ENCODE measurements at regions of chr10 and their contacts with region 1.

Region 1: DNA sequence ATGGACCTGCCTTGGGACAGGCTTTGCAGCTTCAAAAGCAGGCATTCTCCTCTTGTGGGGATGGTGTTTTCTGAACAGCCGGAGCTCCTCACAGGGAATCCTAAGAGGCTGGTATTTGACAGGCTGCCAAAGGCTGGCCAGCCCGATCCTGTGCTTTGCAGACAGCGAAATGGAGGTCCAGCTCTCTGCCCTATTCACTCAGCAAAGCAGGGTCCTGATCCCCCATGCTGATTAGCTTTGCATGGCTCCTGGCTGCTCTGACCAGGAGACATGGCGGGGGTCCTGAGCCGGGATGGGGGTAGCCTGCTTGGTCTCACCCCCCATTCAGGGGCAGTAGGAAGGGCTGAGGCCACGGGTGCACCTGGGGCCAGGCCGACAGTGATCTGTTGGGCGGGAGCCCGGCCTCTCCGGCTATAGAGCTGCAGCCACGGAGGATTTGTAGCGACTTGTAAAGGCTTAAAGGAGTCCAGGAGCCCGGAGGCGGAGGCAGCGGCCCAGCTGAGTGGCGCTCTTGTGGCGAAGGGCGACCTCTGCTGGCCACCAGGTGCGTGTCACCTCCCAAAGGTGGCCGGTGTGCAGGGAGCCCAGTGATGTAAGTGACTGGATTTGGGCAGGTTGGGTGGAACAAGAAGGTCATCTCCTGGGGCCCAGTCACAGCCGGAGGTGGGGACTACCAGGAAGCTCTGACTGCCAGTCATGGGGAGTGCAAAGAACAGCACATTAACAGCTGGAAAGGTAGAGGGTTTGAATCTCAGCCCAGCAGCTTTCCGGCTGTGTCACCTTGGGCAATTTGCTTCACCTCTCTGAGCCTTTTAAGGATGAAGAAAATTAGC is 126.5 kb downstream of the ZMIZ1 start:
- DNase-seq: peak; percentile 89
- ATAC-seq: peak; percentile 92
- H3K4me3 Mint-ChIP-seq: no peak overlapping the region
- H3K27ac Mint-ChIP-seq: no peak overlapping the region
- H3K4me1 Mint-ChIP-seq: peaks cover 4% of the 10 kb centered on the region
- H3K27me3 Mint-ChIP-seq: no peaks in the 10 kb centered on the region
- CTCF ChIP-seq: peak; percentile 95

Region 2: DNA sequence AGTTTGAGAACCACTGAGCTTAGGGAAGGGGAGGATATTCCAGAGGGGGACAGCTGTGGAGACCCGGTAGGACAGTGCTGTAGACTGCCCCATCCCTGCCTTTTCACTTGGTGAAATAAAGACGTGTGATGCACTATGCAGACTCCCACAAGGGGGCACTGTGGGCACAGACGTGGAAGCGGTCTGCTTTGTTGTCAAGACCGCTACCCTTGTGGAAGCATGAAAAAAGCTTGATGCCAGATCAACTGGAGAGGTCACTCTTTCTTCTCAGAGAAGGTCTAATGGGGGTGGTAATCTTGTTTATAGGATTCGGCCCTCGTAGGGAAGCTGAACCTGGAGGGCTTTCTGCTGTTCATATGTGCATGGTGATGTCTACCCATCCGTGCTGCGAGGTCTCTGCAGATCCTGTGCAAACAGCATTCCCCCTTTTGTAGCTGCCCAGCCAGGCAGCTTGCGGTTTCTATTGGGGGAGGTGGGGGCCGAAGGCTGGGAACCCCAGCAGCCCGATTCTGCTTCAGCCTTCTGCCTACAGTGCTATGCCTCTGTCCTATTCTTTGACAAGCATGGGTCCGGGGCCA is 1147.9 kb before region 1 on chr10:
- CTCF ChIA-PET with region 1: interaction called, 21 read pairs
- POLR2A ChIA-PET with region 1: no interaction called
- intact Hi-C with region 1: loop called (anchors 10 kb)
- DNase-seq: peak; percentile 94
- ATAC-seq: peak; percentile 90
- H3K4me3 Mint-ChIP-seq: no peak overlapping the region
- H3K27ac Mint-ChIP-seq: no peak overlapping the region
- H3K4me1 Mint-ChIP-seq: peaks cover 27% of the 10 kb centered on the region
- H3K27me3 Mint-ChIP-seq: no peaks in the 10 kb centered on the region
- CTCF ChIP-seq: peak; percentile 82

Region 3: DNA sequence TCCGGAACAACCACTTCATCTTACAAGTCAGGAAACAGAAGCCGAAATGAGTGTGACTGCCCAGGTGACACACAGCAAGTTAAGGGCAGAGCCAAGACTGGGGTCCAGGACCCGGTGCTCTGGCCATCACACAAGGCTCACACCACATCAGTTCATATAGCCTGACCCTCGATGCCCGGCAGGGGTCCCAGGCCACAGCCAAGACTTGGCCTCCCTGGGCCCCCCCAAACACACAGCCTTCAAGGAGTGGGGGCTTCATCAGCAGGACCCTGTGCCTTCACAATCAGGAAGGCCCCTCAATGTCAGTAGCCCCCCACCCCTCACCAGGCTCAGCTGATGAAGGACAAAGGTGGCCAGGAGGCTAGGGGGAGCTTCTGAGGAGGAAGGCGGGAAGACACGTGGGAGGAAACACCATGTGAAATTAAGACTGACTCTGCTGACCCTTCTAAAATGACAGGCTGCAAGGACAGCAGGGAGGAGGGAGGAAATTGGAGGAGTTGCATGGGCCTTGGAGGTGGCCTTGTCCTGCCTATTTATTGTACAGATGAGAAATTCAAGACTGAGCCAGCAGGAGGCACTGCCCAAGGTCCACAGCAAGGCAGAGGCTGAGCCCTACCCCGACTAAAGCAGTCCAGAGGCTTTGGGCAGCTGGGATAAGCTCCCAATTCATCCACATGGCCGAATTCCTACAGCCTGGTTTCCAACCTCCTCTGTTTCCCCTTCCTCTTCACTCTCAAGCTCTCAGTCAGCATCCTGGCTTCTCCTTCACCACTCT is 342.7 kb before region 1 on chr10:
- CTCF ChIA-PET with region 1: interaction called, 7 read pairs
- POLR2A ChIA-PET with region 1: no interaction called
- intact Hi-C with region 1: loop called (anchors 10 kb)
- DNase-seq: peak; percentile 47
- ATAC-seq: peak; percentile 49
- H3K4me3 Mint-ChIP-seq: no peak overlapping the region
- H3K27ac Mint-ChIP-seq: no peak overlapping the region
- H3K4me1 Mint-ChIP-seq: no peaks in the 10 kb centered on the region
- H3K27me3 Mint-ChIP-seq: no peaks in the 10 kb centered on the region
- CTCF ChIP-seq: no peak

Region 4: GRCh38 chr10:78931321-78932053 is 263.8 kb before region 1 on chr10:
- CTCF ChIA-PET with region 1: interaction called, 26 read pairs
- POLR2A ChIA-PET with region 1: no interaction called
- intact Hi-C with region 1: loop called (anchors 10 kb)
- DNase-seq: no peak
- ATAC-seq: no peak
- H3K4me3 Mint-ChIP-seq: no peak overlapping the region
- H3K27ac Mint-ChIP-seq: no peak overlapping the region
- H3K4me1 Mint-ChIP-seq: no peaks in the 10 kb centered on the region
- H3K27me3 Mint-ChIP-seq: no peaks in the 10 kb centered on the region
- CTCF ChIP-seq: no peak

Region 5: DNA sequence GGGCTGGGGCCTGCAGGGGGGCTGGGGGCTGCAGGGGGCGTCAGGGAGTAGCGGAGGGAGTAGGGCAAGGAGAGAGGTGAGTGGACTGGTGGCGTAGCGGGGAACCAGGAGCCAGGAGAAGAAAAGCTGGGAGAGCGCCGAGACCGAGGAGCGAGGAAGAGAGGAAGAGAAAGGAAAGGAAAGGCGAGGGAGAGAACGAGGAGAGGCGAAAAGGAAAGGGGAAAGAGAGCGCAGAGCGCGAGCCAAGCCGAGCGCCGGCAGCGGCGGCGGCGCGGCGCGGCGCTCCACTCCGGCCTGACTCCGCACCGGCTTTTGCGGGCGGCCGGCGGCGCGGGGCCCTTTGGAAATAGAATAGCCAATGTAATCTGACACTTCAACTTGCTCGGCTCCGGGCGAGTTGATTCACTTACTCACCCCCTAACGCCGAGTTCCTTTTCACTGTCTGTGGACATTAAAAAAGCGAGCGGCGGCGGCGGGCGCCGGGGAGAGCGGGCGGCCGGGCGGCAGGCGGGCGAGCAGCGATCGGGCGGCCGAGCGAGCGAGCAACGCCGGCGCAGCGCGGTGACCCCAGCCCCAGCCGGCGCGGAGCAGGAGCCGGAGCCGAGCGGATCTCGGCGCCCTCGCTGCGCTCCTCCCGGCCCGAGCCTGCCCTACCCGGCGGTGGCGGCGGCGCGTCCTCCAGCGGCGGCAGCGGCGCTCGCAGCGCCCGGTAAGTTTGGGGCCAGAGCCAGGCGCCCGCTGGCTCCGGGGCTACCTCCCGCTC is 126.6 kb before region 1 on chr10 and contains the start of gene ZMIZ1:
- CTCF ChIA-PET with region 1: interaction called, 11 read pairs
- POLR2A ChIA-PET with region 1: no interaction called
- intact Hi-C with region 1: loop called (anchors 5 kb)
- DNase-seq: peak; percentile 87
- ATAC-seq: peak; percentile 65
- H3K4me3 Mint-ChIP-seq: peak within 1 kb of the TSS; percentile 89
- H3K27ac Mint-ChIP-seq: peak within 1 kb of the TSS; percentile 86
- H3K4me1 Mint-ChIP-seq: peaks cover 33% of the 10 kb centered on the region
- H3K27me3 Mint-ChIP-seq: no peaks in the 10 kb centered on the region
- CTCF ChIP-seq: no peak
- total RNA-seq, gene ZMIZ1: 46.5 to 52.2 TPM

Region 6: GRCh38 chr10:79139124-79139835 is 56.0 kb before region 1 on chr10:
- CTCF ChIA-PET with region 1: interaction called, 10 read pairs
- POLR2A ChIA-PET with region 1: no interaction called
- intact Hi-C with region 1: no loop called
- DNase-seq: no peak
- ATAC-seq: no peak
- H3K4me3 Mint-ChIP-seq: no peak overlapping the region
- H3K27ac Mint-ChIP-seq: no peak overlapping the region
- H3K4me1 Mint-ChIP-seq: peaks cover 40% of the 10 kb centered on the region
- H3K27me3 Mint-ChIP-seq: no peaks in the 10 kb centered on the region
- CTCF ChIP-seq: no peak

Region 7: GRCh38 chr10:79178614-79179163 is 16.6 kb before region 1 on chr10:
- CTCF ChIA-PET with region 1: interaction called, 27 read pairs
- POLR2A ChIA-PET with region 1: no interaction called
- intact Hi-C with region 1: no loop called
- DNase-seq: no peak
- ATAC-seq: no peak
- H3K4me3 Mint-ChIP-seq: no peak overlapping the region
- H3K27ac Mint-ChIP-seq: no peak overlapping the region
- H3K4me1 Mint-ChIP-seq: no peaks in the 10 kb centered on the region
- H3K27me3 Mint-ChIP-seq: no peaks in the 10 kb centered on the region
- CTCF ChIP-seq: no peak

Region 8: GRCh38 chr10:79292891-79293746 is 97.8 kb after region 1 on chr10:
- CTCF ChIA-PET with region 1: no interaction called
- POLR2A ChIA-PET with region 1: no interaction called
- intact Hi-C with region 1: no loop called
- DNase-seq: peak; percentile 42
- ATAC-seq: peak; percentile 84
- H3K4me3 Mint-ChIP-seq: no peak overlapping the region
- H3K27ac Mint-ChIP-seq: no peak overlapping the region
- H3K4me1 Mint-ChIP-seq: peaks cover 13% of the 10 kb centered on the region
- H3K27me3 Mint-ChIP-seq: no peaks in the 10 kb centered on the region
- CTCF ChIP-seq: peak; percentile 66